GM10248 (cell line): ENCODE measurements at regions of chr1 and their contacts with region 1.

Region 1: GRCh38 chr1:165228676-165229075 is 127.8 kb downstream of the LMX1A start:
- DNase-seq: no peak
- CTCF ChIP-seq: no peak

Region 2: GRCh38 chr1:165207853-165208515 is 20.7 kb before region 1 on chr1:
- CTCF ChIA-PET with region 1: no interaction called
- POLR2A ChIA-PET with region 1: no interaction called
- DNase-seq: no peak
- CTCF ChIP-seq: no peak

Region 3: DNA sequence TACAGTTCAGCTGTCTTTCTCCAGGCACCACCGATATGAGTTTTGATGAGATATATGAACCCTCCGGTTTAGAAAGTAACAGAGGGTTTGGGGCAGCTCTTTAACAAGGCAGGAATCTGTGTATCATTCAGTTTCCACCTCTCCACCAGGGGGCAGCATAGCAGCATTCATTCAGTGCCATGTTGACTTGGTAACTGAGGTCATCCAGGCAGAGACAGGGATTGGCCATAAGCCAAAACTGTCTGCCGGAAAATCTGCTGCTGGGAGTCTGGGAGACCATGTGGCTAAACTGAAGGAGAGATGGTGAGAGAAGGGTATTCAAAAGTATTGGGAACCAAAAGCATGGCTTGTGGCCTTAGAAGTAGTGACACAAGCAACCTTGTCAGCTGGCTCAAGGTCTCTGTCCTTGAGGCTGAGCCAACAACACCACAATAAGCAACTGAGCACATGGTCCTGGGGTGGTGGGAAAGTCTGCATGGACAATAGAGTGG is 29.3 kb after region 1 on chr1:
- CTCF ChIA-PET with region 1: interaction called, 10 read pairs
- POLR2A ChIA-PET with region 1: no interaction called
- DNase-seq: peak; percentile 56
- CTCF ChIP-seq: peak; percentile 61

Region 4: DNA sequence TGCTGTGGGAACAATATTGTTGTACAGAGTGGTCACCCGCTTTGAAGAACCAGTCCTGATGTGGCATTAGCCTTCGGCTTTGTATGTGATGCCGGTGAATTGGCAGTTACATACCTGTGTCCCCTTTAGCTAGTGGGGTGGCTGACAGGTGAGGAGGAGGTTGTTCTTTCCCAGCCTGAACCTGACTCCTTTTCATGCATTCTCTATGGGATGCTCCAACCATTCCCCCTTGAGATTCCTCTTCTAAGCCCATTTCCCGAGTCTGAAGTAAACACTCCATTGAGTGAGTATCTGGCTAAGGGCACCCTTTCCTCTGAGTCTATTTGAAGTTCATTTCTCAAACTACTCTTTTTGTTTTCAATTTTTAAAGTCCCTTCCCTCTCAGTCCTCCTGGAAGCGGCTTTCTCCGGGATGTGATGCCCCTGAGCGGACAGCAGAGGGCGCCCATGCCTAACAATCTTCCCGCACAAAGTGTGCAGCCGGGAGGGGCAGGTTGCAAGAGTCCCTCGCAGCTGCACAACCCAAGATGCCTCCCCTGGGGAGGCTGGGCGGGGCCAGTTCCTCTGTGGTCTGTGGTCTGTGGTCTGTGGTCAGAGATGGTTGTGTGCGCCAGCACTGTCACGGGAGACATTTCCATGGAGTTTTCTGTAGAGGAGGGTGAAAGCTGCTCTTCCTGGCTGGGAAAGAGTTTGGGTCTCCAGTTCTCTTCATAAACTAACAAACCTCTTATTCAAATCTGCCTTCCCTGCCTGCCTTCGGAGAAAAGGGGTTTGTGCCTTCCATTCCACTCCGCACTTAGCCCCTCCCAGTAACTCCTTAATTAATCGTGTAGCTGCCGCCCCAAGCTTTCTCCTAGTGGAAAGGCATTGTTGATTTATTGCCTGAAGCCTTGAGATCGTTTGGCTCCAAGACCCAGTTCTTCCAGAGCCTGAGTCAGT is 164.2 kb after region 1 on chr1:
- CTCF ChIA-PET with region 1: no interaction called
- POLR2A ChIA-PET with region 1: no interaction called
- DNase-seq: peak; percentile 86
- CTCF ChIP-seq: peak; percentile 89